ENCODE measurements at regions of chr13 and their contacts with region 1.

Region 1: DNA sequence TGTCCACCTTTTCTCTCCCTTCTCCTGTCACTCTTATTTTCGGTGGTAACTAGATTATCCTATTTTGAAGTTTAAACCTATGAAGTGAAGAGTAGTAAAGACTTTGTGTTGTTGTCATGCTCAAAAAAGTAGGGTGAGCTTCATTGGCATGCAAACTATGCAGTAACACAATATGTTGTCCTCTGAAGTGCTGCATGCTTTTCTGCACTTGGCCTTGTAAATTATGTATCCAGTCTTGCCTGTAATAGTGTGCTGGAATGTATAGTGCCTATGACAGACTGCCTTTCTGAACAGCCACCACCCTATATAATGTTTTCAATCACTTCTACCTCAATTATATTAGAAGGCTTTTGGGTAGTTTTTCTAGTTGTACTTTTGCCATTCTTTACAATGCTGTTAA is 1198.2 kb upstream of the PCDH20 start:
- DNase-seq: no peak
- H3K4me3 ChIP-seq: no peak overlapping the region
- H3K27ac ChIP-seq: no peak overlapping the region
- H3K4me1 ChIP-seq: no peaks in the 10 kb centered on the region
- H3K27me3 ChIP-seq: no peaks in the 10 kb centered on the region
- CTCF ChIP-seq: no peak
- POLR2A ChIP-seq: no peak

Region 2: GRCh38 chr13:62626771-62627170 is 13.0 kb after region 1 on chr13:
- intact Hi-C with region 1: no loop called
- DNase-seq: no peak
- H3K4me3 ChIP-seq: no peak overlapping the region
- H3K27ac ChIP-seq: no peak overlapping the region
- H3K4me1 ChIP-seq: no peaks in the 10 kb centered on the region
- H3K27me3 ChIP-seq: no peaks in the 10 kb centered on the region
- CTCF ChIP-seq: no peak
- POLR2A ChIP-seq: no peak

Region 3: DNA sequence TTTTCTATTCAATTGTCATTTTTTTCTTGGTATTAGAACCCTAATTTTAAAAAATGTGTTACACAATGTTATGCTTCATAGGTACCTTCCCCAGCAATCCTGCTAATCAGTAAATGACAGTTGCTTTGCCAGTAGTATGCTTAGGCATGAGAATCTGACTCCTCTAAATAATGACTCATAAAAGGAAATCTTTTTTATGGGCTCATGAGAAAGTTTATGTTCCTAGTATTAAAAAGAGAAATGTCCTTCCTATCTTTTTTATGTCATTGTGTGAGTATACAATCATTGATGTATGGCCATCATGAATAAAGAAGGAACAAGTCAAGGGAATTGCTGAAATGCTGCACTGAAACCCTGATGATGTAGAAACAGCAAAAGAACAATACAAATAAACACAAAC is 39.6 kb after region 1 on chr13:
- intact Hi-C with region 1: no loop called
- DNase-seq: no peak
- H3K4me3 ChIP-seq: no peak overlapping the region
- H3K27ac ChIP-seq: no peak overlapping the region
- H3K4me1 ChIP-seq: no peaks in the 10 kb centered on the region
- H3K27me3 ChIP-seq: no peaks in the 10 kb centered on the region
- CTCF ChIP-seq: no peak
- POLR2A ChIP-seq: no peak

Region 4: DNA sequence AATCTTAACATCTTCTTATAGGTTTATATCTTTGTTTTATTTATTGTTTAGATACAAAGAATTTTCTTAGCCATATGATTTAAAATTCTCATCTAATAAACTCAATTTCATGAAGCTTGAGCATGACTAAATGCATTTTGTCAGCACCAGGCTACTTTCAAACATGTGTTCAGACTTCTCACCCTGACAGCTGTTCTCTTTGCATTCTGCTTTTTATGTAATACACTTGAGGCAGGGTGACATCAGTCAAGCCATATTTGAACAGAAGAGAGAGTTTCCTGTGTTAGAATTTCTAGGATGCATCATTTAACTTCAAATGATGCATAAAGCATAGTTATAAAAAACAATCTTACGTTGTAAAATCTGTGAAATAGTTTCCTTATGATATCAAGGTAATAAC is 97.0 kb after region 1 on chr13:
- intact Hi-C with region 1: no loop called
- DNase-seq: no peak
- H3K4me3 ChIP-seq: no peak overlapping the region
- H3K27ac ChIP-seq: no peak overlapping the region
- H3K4me1 ChIP-seq: no peaks in the 10 kb centered on the region
- H3K27me3 ChIP-seq: no peaks in the 10 kb centered on the region
- CTCF ChIP-seq: no peak
- POLR2A ChIP-seq: no peak

Region 5: DNA sequence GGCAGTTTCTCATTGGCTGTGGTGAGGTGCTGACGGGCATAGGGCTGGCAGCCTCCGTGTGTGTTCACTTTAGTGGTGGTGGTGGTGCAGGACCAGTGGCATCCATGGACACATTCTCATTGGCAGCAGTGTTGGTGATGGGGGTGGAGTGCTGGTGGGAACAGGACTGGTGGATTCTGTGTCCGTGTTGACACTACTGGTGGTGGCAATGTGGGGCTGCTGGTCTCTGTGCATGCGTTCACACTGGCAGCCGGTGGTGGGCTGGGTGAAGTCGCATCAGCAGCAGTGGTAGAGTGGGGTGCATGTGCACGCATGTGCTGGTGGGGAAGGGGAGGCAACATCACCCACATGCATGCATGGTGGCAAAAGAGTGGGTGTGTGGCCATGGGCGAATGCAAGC is 273.2 kb after region 1 on chr13:
- intact Hi-C with region 1: loop called (anchors 10 kb)
- DNase-seq: no peak
- H3K4me3 ChIP-seq: no peak overlapping the region
- H3K27ac ChIP-seq: no peak overlapping the region
- H3K4me1 ChIP-seq: no peaks in the 10 kb centered on the region
- H3K27me3 ChIP-seq: no peaks in the 10 kb centered on the region
- CTCF ChIP-seq: no peak
- POLR2A ChIP-seq: no peak

Region 6: DNA sequence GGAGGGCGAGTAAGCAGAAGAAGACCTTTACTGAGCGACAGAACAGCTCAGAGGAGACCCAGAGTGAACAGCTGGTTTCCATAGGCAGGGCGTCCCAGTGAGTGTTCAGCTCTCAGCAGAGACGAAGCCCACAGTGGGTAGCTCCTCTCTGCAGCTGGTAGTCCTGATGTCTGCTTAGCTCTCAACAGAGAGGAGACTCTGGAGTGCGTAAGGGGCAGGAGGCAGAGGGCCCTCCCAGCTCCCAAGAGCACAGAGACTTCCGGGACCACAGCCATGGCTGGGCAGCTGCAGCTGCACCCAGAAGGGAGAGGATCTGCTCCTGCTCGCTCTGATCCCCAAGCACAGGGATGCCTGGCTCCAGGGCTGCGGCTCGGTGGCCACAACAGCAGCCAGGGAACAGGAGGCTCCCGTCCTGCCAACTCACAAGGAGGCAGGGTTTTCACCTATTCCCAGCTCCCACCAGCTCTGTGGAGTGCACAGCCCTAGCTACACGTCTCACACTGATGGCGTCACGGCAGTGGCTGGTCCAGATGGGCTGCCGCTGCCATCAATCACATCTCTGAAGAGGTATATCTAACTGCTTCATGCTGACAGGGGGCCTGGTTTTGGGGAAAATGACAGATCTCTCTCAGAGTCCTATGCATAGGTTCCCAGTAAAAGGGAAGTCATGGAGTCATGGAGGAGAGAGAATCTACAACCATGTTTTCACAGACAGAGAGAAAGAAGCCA is 1461.9 kb after region 1 on chr13:
- intact Hi-C with region 1: no loop called
- DNase-seq: no peak
- H3K4me3 ChIP-seq: no peak overlapping the region
- H3K27ac ChIP-seq: no peak overlapping the region
- H3K4me1 ChIP-seq: no peaks in the 10 kb centered on the region
- H3K27me3 ChIP-seq: no peaks in the 10 kb centered on the region
- CTCF ChIP-seq: no peak
- POLR2A ChIP-seq: no peak

Measured in vagina (tissue), 2 donors.